Posterior cingulate gyrus (tissue), 11 donors: ENCODE measurements at regions of chr9 and their contacts with region 1.

Region 1: GRCh38 chr9:35829084-35829763 is at the start of gene TMEM8B:
- DNase-seq: peak; percentile 91 to 99 (median 96)

Region 2: GRCh38 chr9:35495984-35496383 is 333.2 kb before region 1 on chr9:
- intact Hi-C with region 1: no loop called
- DNase-seq: no peak

Region 3: DNA sequence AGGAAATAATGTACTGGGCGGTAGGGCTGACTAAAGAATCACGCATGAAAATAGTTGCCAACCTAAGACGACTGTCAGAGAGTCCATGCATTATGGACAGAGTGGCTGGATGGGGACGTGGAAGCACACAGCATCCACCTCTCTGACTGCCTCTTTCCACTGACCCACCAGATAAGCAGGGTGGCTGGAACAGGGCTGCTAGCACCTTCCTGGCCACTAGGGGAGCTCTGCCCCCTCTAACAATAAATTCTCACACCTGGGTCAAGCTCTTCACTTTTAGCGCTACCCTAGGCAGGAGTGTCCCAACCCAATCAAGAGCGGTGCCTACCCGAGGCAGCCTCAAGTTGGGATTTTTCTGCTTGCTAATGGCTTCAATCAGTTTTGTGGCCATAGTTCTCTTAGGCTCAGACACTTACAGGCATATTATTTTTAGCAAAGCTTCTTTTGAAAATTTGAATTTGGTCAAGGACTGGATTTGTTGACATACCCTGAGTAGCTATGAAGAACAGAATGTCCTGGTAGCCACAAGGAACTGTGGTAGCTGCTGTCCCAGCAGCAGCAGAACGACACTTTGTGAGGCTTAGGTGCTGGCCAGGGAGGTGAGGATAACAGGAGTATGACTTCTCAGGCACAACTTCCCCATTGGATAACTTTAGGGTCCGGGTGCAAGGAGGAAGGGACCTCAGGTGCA is 132.6 kb before region 1 on chr9:
- intact Hi-C with region 1: no loop called
- DNase-seq: peak in 4 of 10 donors; percentile 35 to 90 (median 46)

Region 4: GRCh38 chr9:35790385-35791296 is 38.6 kb before region 1 on chr9:
- intact Hi-C with region 1: loop called (anchors 5 kb)
- DNase-seq: peak in 7 of 10 donors; percentile 52 to 93 (median 72)

Region 5: DNA sequence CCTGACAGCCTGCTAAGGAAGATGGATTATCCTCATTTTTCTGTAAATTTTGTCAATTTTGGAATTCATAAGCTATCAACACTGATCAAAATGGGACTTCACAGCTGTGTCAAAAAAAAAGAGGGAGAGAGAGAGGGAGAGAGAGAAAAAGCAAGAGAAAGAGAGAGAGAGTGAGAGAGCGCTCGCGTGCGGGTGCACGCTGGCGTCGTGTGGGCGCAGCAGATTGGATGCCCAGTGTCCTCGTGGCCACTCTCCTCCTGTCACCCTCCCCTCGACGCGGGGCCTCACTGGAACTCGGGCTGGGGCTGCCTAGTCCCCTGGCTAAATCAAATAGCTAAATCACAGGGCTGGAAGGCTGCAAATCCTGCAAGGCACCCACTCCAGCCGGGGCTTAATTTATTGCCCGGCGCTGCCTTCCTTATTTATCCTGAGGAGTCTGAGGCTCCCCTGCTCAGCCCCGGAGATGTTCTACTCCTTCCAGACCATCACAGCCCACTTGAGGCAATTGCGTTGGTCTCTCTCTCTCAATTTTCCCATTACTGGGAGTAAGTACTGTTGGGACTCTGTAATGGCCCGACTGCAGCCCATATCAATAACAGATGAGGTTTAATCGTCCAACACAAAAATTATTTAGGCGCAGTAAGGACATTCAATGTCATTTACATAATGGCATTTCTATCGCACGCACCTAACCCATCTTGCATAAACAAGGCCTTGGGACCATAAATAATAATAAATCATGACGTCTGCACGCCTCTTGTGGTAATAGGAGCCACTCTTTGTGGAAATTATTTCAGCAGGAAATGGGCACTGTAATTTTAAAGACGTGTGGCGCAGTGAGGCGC is 1110.7 kb after region 1 on chr9:
- intact Hi-C with region 1: no loop called
- DNase-seq: no peak